Prostate gland (tissue), 2 donors: ENCODE measurements at regions of chr21 and their contacts with region 1.

Region 1: DNA sequence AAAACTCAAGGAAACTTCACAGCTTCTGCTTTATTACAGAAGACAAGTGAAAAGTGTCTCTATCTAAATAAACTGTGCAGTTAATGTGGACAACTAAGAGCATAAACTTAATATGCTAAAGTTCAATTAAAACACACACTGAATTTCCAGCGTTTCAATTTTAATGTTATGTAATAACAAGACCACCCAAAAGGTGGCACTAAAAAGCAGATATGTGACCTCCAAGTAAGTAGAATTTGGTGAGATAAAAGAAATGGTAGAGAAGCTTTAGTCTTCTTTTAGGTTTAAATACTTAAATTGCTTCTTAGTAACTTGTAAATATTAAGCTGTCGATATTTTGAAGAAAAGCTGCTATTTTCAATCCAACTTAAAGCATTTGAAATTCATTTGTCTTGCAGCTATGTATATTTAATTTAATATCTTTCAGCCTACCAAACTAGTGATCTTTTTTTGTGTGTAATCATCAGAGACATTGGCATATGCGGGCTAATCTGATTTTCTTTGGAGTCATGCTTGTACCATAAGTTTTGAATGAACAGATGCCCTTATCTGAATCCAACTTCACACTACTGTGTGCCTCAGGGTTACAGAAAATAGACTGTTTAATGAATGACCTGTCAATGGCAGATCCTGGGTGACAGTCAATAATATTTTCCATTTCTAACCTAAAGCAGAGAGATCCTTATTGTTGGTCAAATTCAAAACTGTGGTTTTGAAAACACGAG is 36.5 kb upstream of the ADAMTS1 start:
- DNase-seq: no peak
- H3K4me3 ChIP-seq: no peak overlapping the region
- H3K27ac ChIP-seq: no peak overlapping the region
- H3K4me1 ChIP-seq: peaks cover under 1% of the 10 kb centered on the region
- H3K27me3 ChIP-seq: no peaks in the 10 kb centered on the region
- CTCF ChIP-seq: peak in 3 of 4 experiments; percentile 8 to 41 (median 37)
- POLR2A ChIP-seq: no peak

Region 2: GRCh38 chr21:26961698-26962097 is 80.0 kb after region 1 on chr21:
- intact Hi-C with region 1: loop called (anchors 2 kb)
- DNase-seq: no peak
- H3K4me3 ChIP-seq: no peak overlapping the region
- H3K27ac ChIP-seq: no peak overlapping the region
- H3K4me1 ChIP-seq: no peaks in the 10 kb centered on the region
- H3K27me3 ChIP-seq: peaks cover 6% of the 10 kb centered on the region
- CTCF ChIP-seq: no peak
- POLR2A ChIP-seq: no peak

Region 3: GRCh38 chr21:26982767-26983166 is 101.1 kb after region 1 on chr21:
- intact Hi-C with region 1: no loop called
- DNase-seq: no peak
- H3K4me3 ChIP-seq: no peak overlapping the region
- H3K27ac ChIP-seq: no peak overlapping the region
- H3K4me1 ChIP-seq: no peaks in the 10 kb centered on the region
- H3K27me3 ChIP-seq: no peaks in the 10 kb centered on the region
- CTCF ChIP-seq: no peak
- POLR2A ChIP-seq: no peak

Region 4: DNA sequence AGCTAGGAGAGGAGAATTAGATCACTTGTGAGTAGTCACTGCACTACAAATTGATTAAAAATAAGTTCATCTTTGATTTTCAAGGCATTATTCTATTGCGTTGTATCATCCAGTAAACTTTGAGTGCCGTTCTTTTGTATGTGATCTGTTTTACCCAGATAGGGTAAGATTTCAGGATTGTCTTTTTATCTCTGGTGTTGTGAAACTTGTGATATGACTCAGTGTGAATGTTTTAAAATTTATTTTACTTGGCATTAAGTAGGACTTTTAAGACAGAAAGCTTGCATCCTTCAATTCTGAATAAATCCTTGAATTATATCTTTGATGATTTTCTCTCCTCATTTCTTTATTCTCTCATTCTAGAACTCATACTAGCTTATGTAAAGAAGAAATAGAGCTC is 178.5 kb after region 1 on chr21:
- intact Hi-C with region 1: loop called (anchors 10 kb)
- DNase-seq: no peak
- H3K4me3 ChIP-seq: no peak overlapping the region
- H3K27ac ChIP-seq: no peak overlapping the region
- H3K4me1 ChIP-seq: no peaks in the 10 kb centered on the region
- H3K27me3 ChIP-seq: no peaks in the 10 kb centered on the region
- CTCF ChIP-seq: no peak
- POLR2A ChIP-seq: no peak

Region 5: DNA sequence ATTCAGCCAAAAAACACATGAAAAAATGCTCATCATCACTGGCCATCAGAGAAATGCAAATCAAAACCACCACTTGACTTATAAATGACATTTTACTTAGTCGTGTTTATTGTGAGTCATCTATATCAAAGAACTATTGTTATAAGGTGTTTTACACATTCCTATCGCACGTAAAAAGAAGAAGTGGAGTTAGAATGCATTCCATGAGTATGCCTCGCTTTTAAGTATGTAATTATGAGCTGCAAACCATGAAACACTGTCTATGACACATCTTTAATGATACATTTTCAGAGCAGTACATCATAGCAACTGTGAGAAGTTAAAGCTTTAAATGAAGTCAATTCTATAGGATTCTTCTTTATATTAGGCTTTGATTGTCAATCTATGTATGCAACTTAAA is 699.5 kb after region 1 on chr21:
- intact Hi-C with region 1: no loop called
- DNase-seq: no peak
- H3K4me3 ChIP-seq: no peak overlapping the region
- H3K27ac ChIP-seq: no peak overlapping the region
- H3K4me1 ChIP-seq: no peaks in the 10 kb centered on the region
- H3K27me3 ChIP-seq: no peaks in the 10 kb centered on the region
- CTCF ChIP-seq: no peak
- POLR2A ChIP-seq: no peak

Region 6: GRCh38 chr21:27693376-27693775 is 811.7 kb after region 1 on chr21:
- intact Hi-C with region 1: loop called (anchors 10 kb)
- DNase-seq: no peak
- H3K4me3 ChIP-seq: no peak overlapping the region
- H3K27ac ChIP-seq: no peak overlapping the region
- H3K4me1 ChIP-seq: no peaks in the 10 kb centered on the region
- H3K27me3 ChIP-seq: no peaks in the 10 kb centered on the region
- CTCF ChIP-seq: no peak
- POLR2A ChIP-seq: no peak